B cell (primary cell): ENCODE measurements at regions of chr20 and their contacts with region 1.

Region 1: DNA sequence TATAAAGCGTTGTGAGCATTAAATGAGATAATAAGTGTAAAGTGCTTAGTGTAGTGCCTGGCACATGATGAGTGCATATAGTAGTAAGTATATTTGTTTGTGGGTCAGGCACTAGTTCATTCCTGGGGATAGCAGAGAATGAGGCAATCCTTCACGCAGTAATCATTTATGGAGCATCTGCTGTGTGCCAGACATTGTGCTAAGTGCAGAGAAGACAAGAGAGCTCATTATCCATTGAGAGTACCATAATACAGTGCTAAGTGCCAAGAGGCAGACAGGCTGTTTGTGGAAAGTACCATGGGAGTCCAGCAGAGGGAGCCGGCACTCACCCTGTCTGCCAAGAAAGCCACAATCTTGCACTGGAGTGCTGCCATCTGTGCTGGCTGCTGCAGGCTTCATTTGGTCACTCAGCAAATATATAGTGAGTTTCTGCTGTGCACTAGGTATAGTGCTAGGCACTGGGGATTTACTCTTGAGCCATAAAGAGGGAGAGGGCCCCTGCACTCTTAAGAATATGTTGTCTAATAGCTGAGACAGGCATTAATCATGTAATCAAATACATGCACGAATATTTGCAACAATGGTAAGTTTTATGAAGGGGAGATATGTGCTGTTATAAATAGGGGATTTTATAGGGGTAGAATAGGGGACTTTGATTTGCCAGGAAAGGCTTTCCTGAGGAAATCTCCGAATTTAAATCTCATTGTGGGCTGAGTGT is 12.9 kb upstream of the MROH8 start:
- DNase-seq: peak; percentile 75
- ATAC-seq: peak; percentile 82
- H3K4me3 ChIP-seq: no peak overlapping the region
- H3K4me3 Mint-ChIP-seq: no peak overlapping the region
- H3K27ac ChIP-seq: no peak overlapping the region
- H3K27ac Mint-ChIP-seq: no peak overlapping the region
- H3K4me1 ChIP-seq: peaks cover 18 to 37% of the 10 kb centered on the region in 2 donors
- H3K4me1 Mint-ChIP-seq: peaks cover 50% of the 10 kb centered on the region
- H3K27me3 ChIP-seq: no peaks in the 10 kb centered on the region
- H3K27me3 Mint-ChIP-seq: no peaks in the 10 kb centered on the region
- CTCF ChIP-seq: peak; percentile 97

Region 2: DNA sequence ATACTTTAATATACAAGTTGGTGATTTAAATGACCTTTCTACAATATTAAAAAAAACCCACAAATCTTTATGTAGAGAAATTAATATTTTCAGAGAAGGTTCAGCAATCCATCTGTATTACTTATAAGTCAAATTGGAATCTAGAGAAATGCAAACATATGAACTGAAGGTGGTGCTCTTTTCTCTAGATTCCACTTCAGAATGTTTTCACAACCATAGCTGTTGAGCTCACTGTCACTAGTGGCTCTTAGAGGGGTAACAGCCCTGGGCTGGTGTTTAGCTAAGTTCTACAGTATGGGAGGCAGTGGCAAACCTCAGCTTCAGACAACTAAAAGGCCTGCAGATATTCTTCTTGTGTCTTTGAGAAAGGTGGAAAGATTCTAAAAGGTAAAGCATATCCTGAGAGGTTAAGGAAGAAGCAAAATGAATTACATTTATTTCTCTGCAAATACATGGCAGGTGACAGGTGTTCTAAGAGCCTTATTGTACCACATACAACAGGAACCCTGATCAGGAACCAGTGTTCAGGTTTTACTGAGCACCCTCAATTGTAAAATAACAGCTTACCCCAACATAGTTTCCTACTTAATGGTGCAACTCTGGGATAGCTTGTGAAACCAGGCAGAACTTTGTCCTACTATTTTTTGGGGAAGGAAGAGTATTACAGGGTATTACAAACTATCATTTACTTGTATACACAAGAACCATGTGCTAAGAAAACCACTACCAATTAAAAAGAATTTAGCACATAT is 184.2 kb before region 1 on chr20:
- CTCF ChIA-PET with region 1: interaction called, 26 read pairs
- POLR2A ChIA-PET with region 1: no interaction called
- intact Hi-C with region 1: no loop called
- DNase-seq: peak; percentile 51
- ATAC-seq: peak; percentile 36
- H3K4me3 ChIP-seq: no peak overlapping the region
- H3K4me3 Mint-ChIP-seq: peak overlapping the region; percentile 70
- H3K27ac ChIP-seq: peak overlapping the region; percentile 35 to 57
- H3K27ac Mint-ChIP-seq: peak overlapping the region; percentile 59
- H3K4me1 ChIP-seq: peaks cover 46 to 55% of the 10 kb centered on the region in 2 donors
- H3K4me1 Mint-ChIP-seq: peaks cover 38% of the 10 kb centered on the region
- H3K27me3 ChIP-seq: no peaks in the 10 kb centered on the region
- H3K27me3 Mint-ChIP-seq: no peaks in the 10 kb centered on the region
- CTCF ChIP-seq: peak; percentile 24

Region 3: DNA sequence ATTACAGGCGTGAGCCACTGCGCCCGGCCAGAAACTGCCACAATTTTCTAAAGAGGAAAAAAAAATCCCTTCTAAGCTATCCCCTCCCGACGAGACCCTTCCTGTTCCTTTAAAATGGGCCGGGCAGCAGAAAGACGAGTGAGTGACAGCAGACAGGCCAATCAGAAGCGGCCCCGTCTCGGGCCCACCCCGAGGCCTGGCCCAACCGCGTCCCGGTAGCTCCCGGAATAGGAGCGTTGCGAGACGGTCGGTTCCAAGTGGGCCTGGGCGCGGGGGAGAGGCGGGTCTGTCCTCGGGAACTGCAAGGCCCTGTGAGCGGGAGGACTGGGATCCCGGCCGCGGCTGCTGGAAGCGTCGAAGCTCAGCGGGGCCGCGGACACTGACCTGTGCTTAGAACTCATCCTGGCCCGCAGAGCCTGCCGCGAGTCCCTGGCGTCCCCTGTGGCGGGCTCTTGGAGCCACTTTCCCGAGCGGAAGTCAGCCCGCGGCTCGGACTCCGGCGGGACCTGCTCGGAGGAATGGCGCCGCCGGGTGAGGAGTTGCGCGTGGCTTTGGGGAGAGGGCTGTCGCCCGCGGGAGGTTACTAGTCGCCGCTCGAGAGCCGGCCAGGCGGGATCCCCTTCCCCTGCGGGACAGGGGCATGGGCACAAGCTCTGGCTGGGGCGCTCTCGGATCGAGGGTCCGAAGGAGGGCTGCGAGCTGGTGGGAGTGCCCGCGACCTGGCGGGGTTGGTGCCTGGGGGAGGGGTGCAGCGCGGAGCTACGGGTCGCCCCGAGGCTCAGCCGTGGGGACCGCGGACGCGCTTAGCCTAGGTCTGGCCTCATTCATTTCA is 13.2 kb before region 1 on chr20 and contains the starts of genes MROH8 and RPN2:
- CTCF ChIA-PET with region 1: interaction called, 79 read pairs
- POLR2A ChIA-PET with region 1: interaction called, 8 read pairs
- intact Hi-C with region 1: loop called (anchors 1 kb)
- DNase-seq: peak; percentile 95
- ATAC-seq: peak; percentile 91
- H3K4me3 ChIP-seq: peak within 1 kb of the TSS; percentile 85 to 100 (median 89)
- H3K4me3 Mint-ChIP-seq: peak within 1 kb of the TSS; percentile 98
- H3K27ac ChIP-seq: peak within 1 kb of the TSS; percentile 80 to 95
- H3K27ac Mint-ChIP-seq: peak within 1 kb of the TSS; percentile 99
- H3K4me1 ChIP-seq: peaks cover 24 to 34% of the 10 kb centered on the region in 2 donors
- H3K4me1 Mint-ChIP-seq: peaks cover 40% of the 10 kb centered on the region
- H3K27me3 ChIP-seq: no peaks in the 10 kb centered on the region
- H3K27me3 Mint-ChIP-seq: no peaks in the 10 kb centered on the region
- CTCF ChIP-seq: no peak
- total RNA-seq, gene MROH8: 4.6 and 6.3 TPM in 2 replicates
- total RNA-seq, gene RPN2: 80.2 and 86.9 TPM in 2 replicates

Region 4: DNA sequence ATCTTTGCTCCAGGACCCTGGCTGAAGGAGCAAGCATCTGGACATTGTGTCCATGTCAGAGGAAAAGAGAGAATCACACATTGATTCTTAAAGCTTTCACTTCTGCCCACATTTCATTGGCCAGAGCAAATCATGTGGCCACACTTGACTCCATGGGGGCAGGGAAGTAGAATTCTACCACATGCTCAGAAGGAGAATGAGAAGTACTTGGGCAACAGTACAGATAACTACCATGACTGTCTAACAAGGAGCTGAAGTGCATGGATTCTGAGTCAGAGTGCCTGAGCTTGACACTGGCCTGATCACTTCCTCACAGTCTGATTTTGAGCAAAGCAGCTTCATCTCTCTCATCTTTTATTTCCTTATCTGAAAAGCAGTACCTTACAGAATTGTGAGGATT is 30.8 kb after region 1 on chr20:
- CTCF ChIA-PET with region 1: interaction called, 15 read pairs
- POLR2A ChIA-PET with region 1: no interaction called
- intact Hi-C with region 1: no loop called
- DNase-seq: peak; percentile 30
- ATAC-seq: peak; percentile 58
- H3K4me3 ChIP-seq: no peak overlapping the region
- H3K4me3 Mint-ChIP-seq: no peak overlapping the region
- H3K27ac ChIP-seq: peak overlapping the region in 1 of 2 donors; percentile 28
- H3K27ac Mint-ChIP-seq: peak overlapping the region; percentile 20
- H3K4me1 ChIP-seq: peaks cover 5% of the 10 kb centered on the region in 2 donors
- H3K4me1 Mint-ChIP-seq: peaks cover 6% of the 10 kb centered on the region
- H3K27me3 ChIP-seq: no peaks in the 10 kb centered on the region
- H3K27me3 Mint-ChIP-seq: no peaks in the 10 kb centered on the region
- CTCF ChIP-seq: no peak

Region 5: GRCh38 chr20:37480919-37481318 is 288.6 kb after region 1 on chr20:
- CTCF ChIA-PET with region 1: no interaction called
- POLR2A ChIA-PET with region 1: no interaction called
- intact Hi-C with region 1: no loop called
- DNase-seq: no peak
- ATAC-seq: no peak
- H3K4me3 ChIP-seq: no peak overlapping the region
- H3K4me3 Mint-ChIP-seq: no peak overlapping the region
- H3K27ac ChIP-seq: no peak overlapping the region
- H3K27ac Mint-ChIP-seq: no peak overlapping the region
- H3K4me1 ChIP-seq: no peaks in the 10 kb centered on the region
- H3K4me1 Mint-ChIP-seq: no peaks in the 10 kb centered on the region
- H3K27me3 ChIP-seq: peaks cover 0 to 7% (median 2%) of the 10 kb centered on the region in 4 experiments
- H3K27me3 Mint-ChIP-seq: peaks cover 40% of the 10 kb centered on the region
- CTCF ChIP-seq: no peak

Region 6: GRCh38 chr20:37527638-37528441 is 335.5 kb after region 1 on chr20 and contains the start of gene BLCAP:
- CTCF ChIA-PET with region 1: interaction called, 307 read pairs
- POLR2A ChIA-PET with region 1: no interaction called
- intact Hi-C with region 1: loop called (anchors 2 kb)
- DNase-seq: peak; percentile 97
- ATAC-seq: peak; percentile 85
- H3K4me3 ChIP-seq: peak within 1 kb of the TSS; percentile 82 to 99 (median 96)
- H3K4me3 Mint-ChIP-seq: peak within 1 kb of the TSS; percentile 89
- H3K27ac ChIP-seq: peak within 1 kb of the TSS; percentile 100
- H3K27ac Mint-ChIP-seq: peak within 1 kb of the TSS; percentile 100
- H3K4me1 ChIP-seq: peaks cover 36 to 41% of the 10 kb centered on the region in 2 donors
- H3K4me1 Mint-ChIP-seq: peaks cover 50% of the 10 kb centered on the region
- H3K27me3 ChIP-seq: no peaks in the 10 kb centered on the region
- H3K27me3 Mint-ChIP-seq: no peaks in the 10 kb centered on the region
- CTCF ChIP-seq: no peak
- total RNA-seq, gene BLCAP: 187 and 188 TPM in 2 replicates

Region 7: DNA sequence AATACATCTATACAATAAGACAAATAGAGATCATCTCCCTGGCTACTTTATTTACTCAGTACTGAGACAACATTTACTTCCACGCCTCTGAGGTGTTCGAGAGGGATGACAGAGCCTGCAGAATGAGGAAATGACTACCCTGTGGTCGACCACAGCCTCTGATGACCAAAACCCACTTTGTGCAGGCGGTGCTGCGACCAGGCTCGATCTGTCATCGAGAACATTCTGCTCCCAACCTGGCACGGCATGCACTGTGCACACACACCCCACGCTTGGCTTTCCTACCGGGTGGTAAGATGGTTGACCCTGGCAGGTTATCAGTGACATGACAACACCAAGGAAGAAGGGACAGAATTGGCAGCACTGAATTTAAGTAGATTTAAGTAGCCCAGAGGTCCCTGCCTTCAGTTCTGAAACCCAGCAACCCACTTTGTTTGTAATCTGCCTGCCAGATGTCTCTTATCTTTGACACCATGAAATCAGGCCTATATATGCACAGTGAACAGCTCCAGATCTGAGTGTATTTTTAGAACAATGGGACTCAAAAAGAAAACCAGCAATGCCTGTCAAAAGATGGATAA is 798.4 kb after region 1 on chr20:
- CTCF ChIA-PET with region 1: interaction called, 4 read pairs
- POLR2A ChIA-PET with region 1: no interaction called
- intact Hi-C with region 1: loop called (anchors 10 kb)
- DNase-seq: peak; percentile 75
- ATAC-seq: peak; percentile 88
- H3K4me3 ChIP-seq: no peak overlapping the region
- H3K4me3 Mint-ChIP-seq: peak overlapping the region; percentile 6
- H3K27ac ChIP-seq: no peak overlapping the region
- H3K27ac Mint-ChIP-seq: peak overlapping the region; percentile 51
- H3K4me1 ChIP-seq: peaks cover 13 to 18% of the 10 kb centered on the region in 2 donors
- H3K4me1 Mint-ChIP-seq: peaks cover 18% of the 10 kb centered on the region
- H3K27me3 ChIP-seq: no peaks in the 10 kb centered on the region
- H3K27me3 Mint-ChIP-seq: no peaks in the 10 kb centered on the region
- CTCF ChIP-seq: no peak